ENCODE measurements at regions of chr3 and their contacts with region 1.

Region 1: GRCh38 chr3:63911873-63912767 is at the start of gene SCAANT1:
- DNase-seq: peak; percentile 68 to 87 (median 82)
- H3K4me3 ChIP-seq: peak within 1 kb of the TSS; percentile 61 to 97 (median 87)
- H3K27ac ChIP-seq: peak within 1 kb of the TSS; percentile 47 to 98 (median 91)
- H3K27me3 ChIP-seq: no peaks in the 10 kb centered on the region
- CTCF ChIP-seq: peak in 25 of 56 donors; percentile 1 to 58 (median 18)
- total RNA-seq, gene SCAANT1: 3.2 to 4.6 TPM in 2 of 120 experiments, not detected in the others

Region 2: GRCh38 chr3:63746211-63746610 is 165.9 kb before region 1 on chr3:
- intact Hi-C with region 1: no loop called
- DNase-seq: no peak
- H3K4me3 ChIP-seq: no peak overlapping the region
- H3K27ac ChIP-seq: no peak overlapping the region
- H3K27me3 ChIP-seq: no peaks in the 10 kb centered on the region
- CTCF ChIP-seq: no peak

Region 3: DNA sequence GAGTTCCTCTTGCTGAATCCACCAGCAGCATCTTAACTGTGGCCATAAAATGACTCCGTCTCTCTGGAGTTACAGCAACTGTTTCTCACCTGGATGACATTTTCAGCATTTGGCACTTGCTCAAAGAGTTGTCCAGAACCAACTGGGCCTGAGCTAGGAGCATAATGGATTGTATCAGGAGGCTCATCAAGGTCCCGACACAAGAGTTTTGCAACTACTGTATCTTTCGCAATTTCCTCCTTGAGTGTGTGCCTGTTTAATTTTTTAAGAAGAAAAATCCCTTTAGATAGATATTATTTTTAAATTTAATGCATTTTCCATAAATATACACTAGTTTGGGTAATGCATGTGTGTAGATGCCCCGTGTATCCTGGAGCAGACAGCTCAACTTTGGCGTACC is 137.3 kb before region 1 on chr3:
- intact Hi-C with region 1: no loop called
- DNase-seq: no peak
- H3K4me3 ChIP-seq: no peak overlapping the region
- H3K27ac ChIP-seq: no peak overlapping the region
- H3K27me3 ChIP-seq: no peaks in the 10 kb centered on the region
- CTCF ChIP-seq: no peak

Region 4: DNA sequence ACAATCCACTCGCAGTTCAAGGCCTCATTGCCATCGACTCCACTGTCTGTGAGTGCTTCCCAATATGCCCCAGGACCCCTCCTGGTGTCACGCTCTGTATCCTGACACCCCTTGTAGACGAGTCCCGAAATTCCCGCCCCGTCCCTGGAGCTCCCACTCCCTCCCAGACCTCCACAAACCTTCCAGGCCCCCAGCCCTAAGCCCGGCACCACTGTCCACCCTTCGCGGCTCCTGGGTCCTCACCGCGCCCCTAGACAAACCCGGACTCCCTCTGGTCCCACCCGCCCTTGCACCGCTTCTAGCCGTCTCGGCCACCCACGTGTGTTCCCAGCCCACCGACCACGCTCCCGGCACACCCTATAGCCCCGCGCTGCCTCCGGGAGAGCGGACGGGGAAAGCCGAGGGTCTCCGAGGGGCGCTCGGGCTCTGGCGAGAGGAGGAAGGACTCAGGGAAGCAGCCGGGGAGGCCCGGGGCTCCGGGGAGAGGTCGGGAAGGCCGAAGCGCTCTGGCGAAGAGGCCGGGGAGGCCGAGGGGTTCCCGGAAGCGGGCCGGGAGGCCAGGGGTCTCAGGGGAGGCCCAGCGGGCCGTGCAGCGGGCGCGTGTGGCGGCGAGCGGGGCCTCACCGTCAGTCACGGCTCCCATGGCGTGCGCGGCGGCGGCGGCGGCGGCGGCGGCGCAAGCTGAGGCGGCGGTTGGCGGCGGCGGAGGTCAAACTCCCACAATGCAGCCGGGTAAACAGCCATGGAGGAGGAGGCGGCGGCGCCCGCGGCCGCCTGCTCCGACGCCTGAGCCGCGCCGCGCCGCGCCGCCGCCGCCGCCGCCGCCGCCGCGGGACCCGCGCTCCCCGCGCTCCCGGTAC is 48.7 kb before region 1 on chr3 and contains the starts of genes ATXN7 and THOC7:
- intact Hi-C with region 1: loop called (anchors 2 to 5 kb)
- DNase-seq: peak in 9 of 10 donors; percentile 41 to 80 (median 59)
- H3K4me3 ChIP-seq: peak within 1 kb of the TSS; percentile 72 to 100 (median 94)
- H3K27ac ChIP-seq: peak within 1 kb of the TSS in 56 of 59 donors; percentile 17 to 93 (median 84)
- H3K27me3 ChIP-seq: no peaks in the 10 kb centered on the region
- CTCF ChIP-seq: no peak
- total RNA-seq, gene ATXN7: 31.6 to 64.8 (median 43.4) TPM
- total RNA-seq, gene THOC7: 40.8 to 97.3 (median 68.6) TPM

Region 5: GRCh38 chr3:63955830-63956545 is 43.9 kb after region 1 on chr3:
- intact Hi-C with region 1: loop called in 1 of 2 experiments (anchors 5 kb)
- DNase-seq: no peak
- H3K4me3 ChIP-seq: no peak overlapping the region
- H3K27ac ChIP-seq: no peak overlapping the region
- H3K27me3 ChIP-seq: no peaks in the 10 kb centered on the region
- CTCF ChIP-seq: no peak

Region 6: GRCh38 chr3:63993653-63994079 is 81.5 kb after region 1 on chr3:
- intact Hi-C with region 1: loop called (anchors 5 to 10 kb)
- DNase-seq: peak; percentile 48 to 79 (median 66)
- H3K4me3 ChIP-seq: no peak overlapping the region
- H3K27ac ChIP-seq: peak overlapping the region in 8 of 59 donors; percentile 12 to 61 (median 36)
- H3K27me3 ChIP-seq: no peaks in the 10 kb centered on the region
- CTCF ChIP-seq: peak; percentile 70 to 98 (median 94)

Measured in dorsolateral prefrontal cortex (tissue), 120 donors.